ENCODE measurements at regions of chr1 and their contacts with region 1.

Region 1: GRCh38 chr1:93304716-93305138 is 41.0 kb upstream of the DR1 start:
- DNase-seq: peak; percentile 43
- ATAC-seq: peak; percentile 44
- H3K4me3 Mint-ChIP-seq: no peak overlapping the region
- H3K27ac Mint-ChIP-seq: no peak overlapping the region
- H3K4me1 Mint-ChIP-seq: no peaks in the 10 kb centered on the region
- H3K27me3 Mint-ChIP-seq: no peaks in the 10 kb centered on the region

Region 2: DNA sequence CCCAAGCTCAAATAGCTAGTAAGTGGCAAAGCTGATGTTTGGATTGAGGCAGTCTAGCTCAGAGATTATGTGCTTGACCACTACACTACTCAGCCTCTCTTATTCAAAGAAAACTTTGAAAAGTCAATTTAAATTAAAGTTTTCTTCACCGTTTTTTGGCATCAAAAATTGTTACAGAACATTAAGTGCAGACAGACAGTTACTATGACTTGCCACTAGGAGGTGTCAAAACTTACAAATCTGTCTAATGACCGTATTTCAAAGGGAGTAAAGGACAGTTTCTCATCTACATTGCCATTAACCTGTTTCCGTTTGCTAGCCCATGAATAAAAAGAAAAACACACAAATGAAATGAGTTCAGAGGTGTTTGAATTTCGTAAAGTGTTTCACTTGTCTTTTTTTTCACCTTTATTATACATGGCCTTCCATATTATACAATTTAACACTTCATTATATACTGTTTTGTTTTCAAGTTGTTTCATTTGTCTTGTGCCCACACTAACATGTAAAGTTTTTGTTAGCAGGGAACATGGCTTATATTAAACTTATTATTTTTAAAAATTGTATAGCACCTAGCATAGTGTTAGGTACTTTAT is 283.1 kb before region 1 on chr1:
- CTCF ChIA-PET with region 1: interaction called, 4 read pairs
- POLR2A ChIA-PET with region 1: no interaction called
- intact Hi-C with region 1: loop called in 1 of 2 experiments (anchors 2 kb)
- DNase-seq: no peak
- ATAC-seq: peak; percentile 72
- H3K4me3 Mint-ChIP-seq: no peak overlapping the region
- H3K27ac Mint-ChIP-seq: no peak overlapping the region
- H3K4me1 Mint-ChIP-seq: no peaks in the 10 kb centered on the region
- H3K27me3 Mint-ChIP-seq: peaks cover 3% of the 10 kb centered on the region

Region 3: DNA sequence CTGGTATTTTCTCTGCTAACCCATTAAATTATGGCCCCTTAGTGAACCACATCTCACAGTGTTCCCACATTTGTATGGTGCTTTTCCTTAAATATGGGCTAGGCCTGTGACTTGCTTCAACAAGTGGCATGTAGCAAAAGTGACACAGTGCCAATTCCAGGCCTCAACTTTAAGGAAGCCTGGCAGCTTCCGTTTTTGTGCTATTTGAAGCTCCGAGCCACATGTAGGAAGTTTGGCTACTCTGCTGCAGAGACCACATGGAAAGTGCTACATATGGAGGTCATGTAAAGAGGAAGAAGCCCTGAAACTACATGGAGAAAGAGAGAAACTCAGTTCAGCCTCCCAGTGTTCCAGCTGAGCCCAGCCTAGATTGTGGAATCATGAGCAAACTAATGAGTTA is 12.5 kb after region 1 on chr1:
- CTCF ChIA-PET with region 1: interaction called, 10 read pairs
- POLR2A ChIA-PET with region 1: no interaction called
- intact Hi-C with region 1: no loop called
- DNase-seq: no peak
- ATAC-seq: no peak
- H3K4me3 Mint-ChIP-seq: no peak overlapping the region
- H3K27ac Mint-ChIP-seq: no peak overlapping the region
- H3K4me1 Mint-ChIP-seq: no peaks in the 10 kb centered on the region
- H3K27me3 Mint-ChIP-seq: no peaks in the 10 kb centered on the region

Region 4: DNA sequence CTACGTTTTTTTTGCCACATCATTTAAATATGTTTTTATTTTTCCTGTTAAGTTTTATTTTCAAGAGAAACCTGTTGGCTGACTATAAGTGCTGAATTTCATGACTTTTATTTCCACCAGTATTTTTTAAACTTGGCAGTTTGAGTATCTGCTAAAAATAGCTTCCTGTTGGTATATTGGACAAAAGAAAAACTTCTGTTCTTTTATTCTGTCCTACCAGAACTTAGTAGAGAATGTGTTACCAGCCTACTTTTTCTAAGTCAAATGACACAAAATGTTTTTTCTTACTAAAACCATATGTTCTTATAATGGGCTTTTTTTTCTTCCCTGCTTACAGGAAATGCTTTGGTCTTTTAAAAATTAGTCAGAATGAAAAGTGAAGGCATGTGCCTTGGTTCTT is 48.6 kb after region 1 on chr1:
- CTCF ChIA-PET with region 1: interaction called, 10 read pairs
- POLR2A ChIA-PET with region 1: interaction called, 8 read pairs
- intact Hi-C with region 1: no loop called
- DNase-seq: no peak
- ATAC-seq: no peak
- H3K4me3 Mint-ChIP-seq: no peak overlapping the region
- H3K27ac Mint-ChIP-seq: peak overlapping the region; percentile 55
- H3K4me1 Mint-ChIP-seq: peaks cover 61% of the 10 kb centered on the region
- H3K27me3 Mint-ChIP-seq: no peaks in the 10 kb centered on the region

Region 5: DNA sequence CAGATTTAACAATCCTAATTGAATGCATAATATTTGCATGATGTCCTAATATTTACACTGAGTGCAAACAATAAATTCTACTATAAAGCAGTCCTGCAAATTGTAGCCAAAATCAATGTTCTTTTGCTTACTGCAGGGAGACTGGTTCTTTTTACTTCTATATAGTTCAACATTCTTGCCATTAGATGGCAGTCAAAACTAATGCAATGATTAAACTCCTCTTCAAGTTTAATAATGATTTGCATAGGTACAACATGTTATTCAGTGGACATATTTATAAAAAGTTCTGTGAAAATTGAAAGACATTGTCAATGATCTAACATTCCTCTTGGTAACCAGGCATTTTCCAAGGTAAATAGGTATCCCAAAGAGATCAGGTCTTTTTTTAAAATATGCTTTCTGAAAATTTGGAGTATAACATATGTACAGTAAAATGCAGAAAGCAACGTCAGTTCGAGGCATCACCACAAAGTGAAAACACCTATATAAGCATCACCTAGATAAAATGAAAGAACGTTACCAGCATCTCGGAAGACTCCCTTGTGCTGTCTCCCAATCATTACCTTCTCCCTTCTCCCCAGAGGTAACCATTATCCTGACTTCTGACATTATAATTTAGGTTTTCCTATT is 133.4 kb after region 1 on chr1:
- CTCF ChIA-PET with region 1: interaction called, 9 read pairs
- POLR2A ChIA-PET with region 1: no interaction called
- intact Hi-C with region 1: loop called (anchors 5 to 10 kb)
- DNase-seq: no peak
- ATAC-seq: no peak
- H3K4me3 Mint-ChIP-seq: no peak overlapping the region
- H3K27ac Mint-ChIP-seq: no peak overlapping the region
- H3K4me1 Mint-ChIP-seq: no peaks in the 10 kb centered on the region
- H3K27me3 Mint-ChIP-seq: peaks cover 2% of the 10 kb centered on the region

Region 6: GRCh38 chr1:93615582-93616150 is 310.9 kb after region 1 on chr1:
- CTCF ChIA-PET with region 1: interaction called, 4 read pairs
- POLR2A ChIA-PET with region 1: no interaction called
- intact Hi-C with region 1: loop called (anchors 1 kb)
- DNase-seq: peak; percentile 80
- ATAC-seq: peak; percentile 86
- H3K4me3 Mint-ChIP-seq: peak overlapping the region; percentile 15
- H3K27ac Mint-ChIP-seq: peak overlapping the region; percentile 86
- H3K4me1 Mint-ChIP-seq: peaks cover 22% of the 10 kb centered on the region
- H3K27me3 Mint-ChIP-seq: peaks cover 6% of the 10 kb centered on the region